Endothelial cell of umbilical vein (primary cell): ENCODE measurements at regions of chr2 and their contacts with region 1.

Region 1: GRCh38 chr2:233026192-233026813 is 6.2 kb upstream of the NEU2 start:
- DNase-seq: no peak
- H3K4me3 ChIP-seq: no peak overlapping the region
- H3K27ac ChIP-seq: no peak overlapping the region
- H3K4me1 ChIP-seq: no peaks in the 10 kb centered on the region
- H3K27me3 ChIP-seq: no peaks in the 10 kb centered on the region
- CTCF ChIP-seq: no peak
- POLR2A ChIP-seq: no peak

Region 2: DNA sequence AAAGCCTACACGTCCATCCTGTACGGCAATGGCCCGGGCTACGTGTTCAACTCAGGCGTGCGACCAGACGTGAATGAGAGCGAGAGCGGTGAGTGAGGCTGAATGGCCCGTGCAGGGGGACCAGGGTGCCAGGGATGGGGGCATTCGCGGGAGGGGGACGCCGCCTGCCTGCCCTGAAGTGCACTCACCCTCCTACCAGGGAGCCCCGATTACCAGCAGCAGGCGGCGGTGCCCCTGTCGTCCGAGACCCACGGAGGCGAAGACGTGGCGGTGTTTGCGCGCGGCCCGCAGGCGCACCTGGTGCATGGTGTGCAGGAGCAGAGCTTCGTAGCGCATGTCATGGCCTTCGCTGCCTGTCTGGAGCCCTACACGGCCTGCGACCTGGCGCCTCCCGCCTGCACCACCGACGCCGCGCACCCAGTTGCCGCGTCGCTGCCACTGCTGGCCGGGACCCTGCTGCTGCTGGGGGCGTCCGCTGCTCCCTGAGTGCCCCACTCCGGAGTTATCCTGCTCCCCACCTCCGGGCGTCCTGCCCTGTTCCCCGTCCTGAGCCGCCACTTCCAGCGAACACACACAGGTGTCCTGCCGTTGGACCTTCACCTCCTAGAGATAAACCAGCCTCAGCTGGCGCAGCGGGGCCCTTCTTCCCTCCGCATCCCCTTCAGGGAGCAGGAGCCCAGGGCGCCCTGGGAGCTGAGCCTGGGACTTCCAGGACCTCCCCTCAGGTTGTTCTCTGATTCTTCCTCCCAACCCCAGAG is 567.5 kb before region 1 on chr2:
- CTCF ChIA-PET with region 1: no interaction called
- POLR2A ChIA-PET with region 1: no interaction called
- dilution Hi-C with region 1: no loop called
- intact Hi-C with region 1: no loop called
- DNase-seq: no peak
- H3K4me3 ChIP-seq: no peak overlapping the region
- H3K27ac ChIP-seq: no peak overlapping the region
- H3K4me1 ChIP-seq: no peaks in the 10 kb centered on the region
- H3K27me3 ChIP-seq: peaks cover 2 to 10% of the 10 kb centered on the region in 2 experiments
- CTCF ChIP-seq: no peak
- POLR2A ChIP-seq: no peak

Region 3: GRCh38 chr2:232809349-232810124 is 216.8 kb before region 1 on chr2:
- CTCF ChIA-PET with region 1: interaction called, 10 read pairs
- POLR2A ChIA-PET with region 1: no interaction called
- dilution Hi-C with region 1: no loop called
- intact Hi-C with region 1: no loop called
- DNase-seq: no peak
- H3K4me3 ChIP-seq: no peak overlapping the region
- H3K27ac ChIP-seq: no peak overlapping the region
- H3K4me1 ChIP-seq: no peaks in the 10 kb centered on the region
- H3K27me3 ChIP-seq: no peaks in the 10 kb centered on the region
- CTCF ChIP-seq: no peak
- POLR2A ChIP-seq: no peak

Region 4: DNA sequence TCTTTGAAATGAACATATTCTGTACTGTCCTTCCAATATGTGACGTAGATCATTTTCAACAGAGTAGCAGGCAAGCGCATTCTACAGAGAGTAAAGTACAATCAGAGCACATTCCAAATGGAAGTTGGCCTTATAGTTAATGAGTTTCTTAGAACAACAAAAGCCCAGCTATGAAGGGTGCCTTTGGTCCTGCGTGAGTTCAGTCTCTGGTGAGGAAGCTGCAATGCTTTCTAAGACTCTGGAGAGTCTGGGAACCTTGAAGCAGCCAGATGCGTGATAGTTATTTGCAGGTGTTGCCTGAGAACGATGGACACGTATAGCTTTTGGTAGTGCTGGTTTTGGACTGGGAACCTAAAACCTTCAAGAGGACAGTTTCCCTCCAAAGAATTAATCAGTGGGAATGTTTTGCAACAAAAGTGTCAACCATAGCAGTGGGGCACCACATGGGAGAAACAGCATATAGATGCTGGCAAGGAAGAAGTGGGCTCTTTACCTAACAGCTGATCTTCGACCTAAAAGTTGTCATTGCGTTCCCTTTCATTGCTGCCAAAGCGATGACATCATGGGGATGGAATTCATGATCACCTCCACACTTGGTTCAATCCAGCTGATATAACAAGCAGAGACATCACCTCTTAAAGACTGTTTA is 165.6 kb before region 1 on chr2:
- CTCF ChIA-PET with region 1: interaction called, 55 read pairs
- POLR2A ChIA-PET with region 1: no interaction called
- dilution Hi-C with region 1: no loop called
- intact Hi-C with region 1: no loop called
- DNase-seq: no peak
- H3K4me3 ChIP-seq: no peak overlapping the region
- H3K27ac ChIP-seq: no peak overlapping the region
- H3K4me1 ChIP-seq: no peaks in the 10 kb centered on the region
- H3K27me3 ChIP-seq: no peaks in the 10 kb centered on the region
- CTCF ChIP-seq: no peak
- POLR2A ChIP-seq: no peak

Region 5: DNA sequence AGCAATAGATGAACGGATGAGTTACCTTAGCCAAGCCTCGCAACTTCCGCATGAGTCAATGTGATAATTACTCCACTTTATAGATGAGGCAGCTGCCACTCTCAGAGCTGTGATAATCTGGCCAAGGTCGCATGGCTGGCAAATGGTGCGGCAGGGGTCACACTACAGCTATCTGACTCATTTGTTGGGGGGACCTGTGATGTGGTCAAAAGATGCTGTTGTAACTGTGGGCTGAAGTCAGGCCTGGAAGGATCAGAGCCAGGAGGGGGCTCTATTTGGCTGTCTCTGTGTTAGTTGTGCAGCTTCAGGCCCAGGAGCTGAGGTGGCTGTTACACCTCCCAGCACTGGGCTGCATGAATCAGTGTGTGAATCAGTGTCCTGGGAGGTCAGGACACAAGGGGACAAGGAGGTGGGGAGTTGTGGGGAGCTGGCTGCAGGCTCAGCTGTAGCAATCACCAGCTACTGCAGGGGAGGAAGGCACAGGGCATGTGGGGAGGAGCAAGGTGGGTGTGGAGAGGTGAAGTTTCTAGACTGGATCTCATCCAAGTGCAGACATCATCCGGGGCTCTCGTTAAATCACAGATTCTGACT is 46.3 kb before region 1 on chr2:
- CTCF ChIA-PET with region 1: interaction called, 12 read pairs
- POLR2A ChIA-PET with region 1: no interaction called
- dilution Hi-C with region 1: no loop called
- intact Hi-C with region 1: no loop called
- DNase-seq: no peak
- H3K4me3 ChIP-seq: no peak overlapping the region
- H3K27ac ChIP-seq: no peak overlapping the region
- H3K4me1 ChIP-seq: no peaks in the 10 kb centered on the region
- H3K27me3 ChIP-seq: peaks cover 0 to 2% of the 10 kb centered on the region in 2 experiments
- CTCF ChIP-seq: no peak
- POLR2A ChIP-seq: no peak

Region 6: DNA sequence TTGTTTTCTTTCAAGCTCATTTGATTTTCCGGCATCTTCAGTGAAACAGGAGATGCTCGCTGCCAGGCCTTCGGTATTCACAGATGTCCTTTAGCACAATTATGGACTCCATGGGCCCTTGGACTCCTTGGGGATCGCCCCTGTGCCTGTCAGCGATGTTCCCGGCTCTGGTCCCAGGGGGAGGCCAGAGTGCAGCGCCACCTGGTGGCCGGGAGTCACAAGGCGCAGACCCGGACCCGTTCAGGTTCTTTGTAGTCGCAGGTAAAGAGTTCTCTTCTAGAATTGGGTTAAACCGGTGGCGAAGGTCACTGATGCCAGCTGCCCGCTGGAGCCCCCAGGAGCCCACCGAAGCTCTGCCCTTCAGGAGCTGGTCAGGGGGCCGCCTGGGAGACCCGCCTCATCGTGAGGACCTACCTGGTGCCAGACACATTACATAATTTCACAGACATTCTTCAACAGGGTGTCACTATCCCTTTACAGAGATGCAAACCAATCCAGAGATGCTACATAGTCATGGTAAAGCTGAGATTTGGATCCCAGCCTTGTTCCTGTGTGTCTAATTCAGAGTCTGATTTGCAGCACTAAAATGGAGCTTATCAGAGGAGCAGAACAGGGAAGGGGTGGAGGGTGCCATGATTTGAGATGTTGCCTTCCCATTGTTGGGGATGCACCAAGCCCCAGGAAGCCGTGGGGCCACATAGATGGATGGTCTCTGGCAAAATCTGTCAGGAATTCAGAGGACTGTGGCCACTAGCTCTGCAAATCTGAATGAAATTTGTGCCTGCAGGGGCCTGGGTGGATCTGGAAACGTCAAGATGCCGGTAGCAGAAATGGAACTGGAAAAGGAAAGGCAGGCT is 27.9 kb after region 1 on chr2:
- CTCF ChIA-PET with region 1: interaction called, 11 read pairs
- POLR2A ChIA-PET with region 1: no interaction called
- dilution Hi-C with region 1: no loop called
- intact Hi-C with region 1: no loop called
- DNase-seq: peak; percentile 34
- H3K4me3 ChIP-seq: no peak overlapping the region
- H3K27ac ChIP-seq: no peak overlapping the region
- H3K4me1 ChIP-seq: peaks cover 4% of the 10 kb centered on the region
- H3K27me3 ChIP-seq: no peaks in the 10 kb centered on the region
- CTCF ChIP-seq: peak; percentile 95 to 98
- POLR2A ChIP-seq: no peak